ENCODE measurements at regions of chr2 and their contacts with region 1.

Region 1: DNA sequence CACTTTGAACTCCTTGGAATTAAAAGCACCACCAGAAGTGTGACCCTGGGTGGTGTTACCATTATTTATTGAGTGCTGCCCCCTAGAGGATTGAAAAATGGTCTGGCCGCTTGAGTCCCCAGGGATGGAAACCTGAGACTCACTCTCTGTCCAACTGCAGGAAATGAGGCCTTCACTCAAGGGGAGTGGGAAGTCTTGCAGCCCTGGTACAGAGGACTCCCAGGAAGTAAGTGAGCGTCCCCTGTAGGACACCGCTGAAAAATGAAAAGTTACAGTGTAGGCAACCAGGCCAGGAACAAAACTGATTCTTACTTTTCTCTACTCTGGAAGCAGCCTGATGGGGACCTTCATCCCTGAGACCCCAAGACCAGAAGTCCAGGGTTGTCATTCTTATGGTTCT is 2.2 kb upstream of the NRP2 start:
- H3K4me3 Mint-ChIP-seq: no peak overlapping the region
- H3K27ac Mint-ChIP-seq: no peak overlapping the region
- H3K4me1 Mint-ChIP-seq: peaks cover 31% of the 10 kb centered on the region
- H3K27me3 Mint-ChIP-seq: peaks cover 50% of the 10 kb centered on the region

Region 2: GRCh38 chr2:204325468-204325867 is 1354.6 kb before region 1 on chr2:
- intact Hi-C with region 1: loop called (anchors 2 kb)
- H3K4me3 Mint-ChIP-seq: no peak overlapping the region
- H3K27ac Mint-ChIP-seq: no peak overlapping the region
- H3K4me1 Mint-ChIP-seq: no peaks in the 10 kb centered on the region
- H3K27me3 Mint-ChIP-seq: peaks cover 2% of the 10 kb centered on the region

Region 3: GRCh38 chr2:204715361-204715760 is 964.7 kb before region 1 on chr2:
- intact Hi-C with region 1: no loop called
- H3K4me3 Mint-ChIP-seq: no peak overlapping the region
- H3K27ac Mint-ChIP-seq: no peak overlapping the region
- H3K4me1 Mint-ChIP-seq: no peaks in the 10 kb centered on the region
- H3K27me3 Mint-ChIP-seq: no peaks in the 10 kb centered on the region

Region 4: GRCh38 chr2:204871231-204871953 is 808.7 kb before region 1 on chr2:
- intact Hi-C with region 1: loop called (anchors 5 kb)
- H3K4me3 Mint-ChIP-seq: no peak overlapping the region
- H3K27ac Mint-ChIP-seq: peak overlapping the region; percentile 7
- H3K4me1 Mint-ChIP-seq: peaks cover 6% of the 10 kb centered on the region
- H3K27me3 Mint-ChIP-seq: no peaks in the 10 kb centered on the region

Region 5: DNA sequence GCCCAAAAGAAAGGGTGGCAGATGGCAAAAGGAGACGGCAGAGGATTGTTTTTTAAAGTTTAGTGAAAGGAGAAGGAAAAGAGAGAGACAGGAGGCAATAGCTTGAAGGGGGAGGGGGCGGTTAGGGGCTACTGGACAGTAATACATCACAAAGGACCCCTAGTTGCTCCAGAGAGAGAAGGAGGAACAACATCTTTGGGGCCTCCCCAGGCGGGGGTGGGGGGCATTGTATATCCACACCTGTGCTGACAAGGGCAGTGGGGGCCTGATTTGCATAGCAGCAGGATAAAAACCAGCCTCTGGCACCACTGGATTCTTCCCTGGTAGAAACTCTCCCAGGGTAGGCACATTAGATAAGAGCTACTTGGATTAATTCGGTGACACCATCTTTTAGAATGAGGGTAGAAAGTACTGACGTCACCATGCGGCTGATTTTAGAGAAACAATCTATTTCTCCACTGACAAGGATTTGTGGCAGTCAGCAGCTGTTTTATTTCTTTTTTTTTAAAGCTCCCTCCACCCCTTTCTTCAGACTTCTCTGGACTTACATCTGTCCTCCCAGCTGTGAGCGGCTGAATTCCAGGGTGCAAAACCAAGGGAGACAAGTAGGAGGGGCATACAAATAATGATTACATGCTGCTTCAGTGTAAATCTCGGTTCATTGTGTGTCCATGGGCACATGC is 197.5 kb before region 1 on chr2:
- intact Hi-C with region 1: no loop called
- H3K4me3 Mint-ChIP-seq: no peak overlapping the region
- H3K27ac Mint-ChIP-seq: no peak overlapping the region
- H3K4me1 Mint-ChIP-seq: no peaks in the 10 kb centered on the region
- H3K27me3 Mint-ChIP-seq: no peaks in the 10 kb centered on the region

Region 6: DNA sequence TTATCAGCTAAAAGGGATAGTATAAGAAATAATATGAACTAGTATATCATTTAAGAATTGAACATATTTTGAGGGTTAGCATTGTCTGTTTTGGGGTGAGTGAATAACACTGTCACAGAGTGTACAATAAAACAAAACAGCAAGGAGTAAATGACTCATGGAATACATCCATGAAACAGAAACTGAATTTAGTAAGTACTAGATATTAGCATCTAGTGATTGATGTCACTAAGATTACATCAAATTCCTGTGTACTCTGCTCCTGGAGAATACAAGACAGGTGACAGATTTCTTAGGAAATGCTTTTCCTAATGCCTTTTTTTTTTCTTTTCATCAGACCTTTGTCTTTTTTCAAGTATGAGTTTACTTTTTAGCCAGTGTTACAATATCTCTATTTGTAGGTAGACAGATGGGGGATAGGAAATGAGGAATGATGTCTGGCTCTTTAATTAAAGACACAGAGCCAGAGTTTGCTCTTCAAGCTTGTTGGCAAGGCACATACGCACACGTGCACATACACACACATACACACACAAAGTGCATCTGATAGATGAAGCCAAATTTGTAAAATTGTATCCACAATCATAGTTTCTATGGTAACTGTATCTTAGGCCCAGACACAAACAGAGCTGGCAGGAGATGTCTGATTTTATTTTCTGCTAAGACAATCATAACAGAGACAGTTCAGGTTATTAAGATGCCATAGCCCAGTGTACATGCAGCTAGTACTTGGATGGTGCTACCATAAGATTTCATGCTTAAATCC is 135.9 kb before region 1 on chr2:
- intact Hi-C with region 1: loop called (anchors 10 kb)
- H3K4me3 Mint-ChIP-seq: no peak overlapping the region
- H3K27ac Mint-ChIP-seq: no peak overlapping the region
- H3K4me1 Mint-ChIP-seq: peaks cover 38% of the 10 kb centered on the region
- H3K27me3 Mint-ChIP-seq: no peaks in the 10 kb centered on the region

Region 7: DNA sequence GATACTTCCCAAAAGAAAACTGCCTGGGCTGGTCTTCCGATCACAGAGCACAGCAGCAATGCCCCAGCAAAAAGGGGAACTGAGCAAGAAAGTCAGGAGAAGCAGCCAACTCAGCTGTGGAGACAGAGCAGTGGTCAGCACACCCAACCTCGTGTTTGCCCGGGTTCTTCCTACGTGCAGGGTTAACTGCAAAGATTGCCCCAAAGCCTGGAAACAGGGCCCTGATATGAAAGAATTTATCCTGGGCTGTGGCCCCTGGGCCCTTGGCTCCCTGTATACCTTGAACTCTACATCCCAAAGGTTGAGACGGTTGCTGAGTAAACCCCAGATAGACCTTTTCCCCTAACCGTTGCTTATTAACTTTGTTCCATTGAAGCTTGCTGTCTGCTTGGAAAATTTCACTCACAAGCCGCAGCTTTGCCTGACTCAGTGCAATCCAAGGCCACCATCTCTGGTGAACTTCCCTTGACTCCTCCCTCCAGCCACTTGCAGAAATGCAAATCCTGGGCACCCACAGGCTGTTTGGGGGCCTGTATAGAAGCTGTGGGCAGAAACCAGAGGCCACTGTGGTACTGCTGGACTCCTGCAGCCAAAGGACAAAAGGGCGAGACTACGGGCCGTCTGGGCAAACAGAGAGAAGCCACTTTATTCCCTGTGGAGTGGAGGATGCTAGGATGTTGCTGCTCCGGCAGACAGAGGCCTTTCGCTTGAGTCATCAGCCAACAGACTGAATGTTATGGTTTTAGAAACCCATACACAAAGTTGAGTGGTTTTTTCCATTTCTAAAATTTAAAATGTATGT is 20.5 kb after region 1 on chr2:
- intact Hi-C with region 1: loop called (anchors 2 kb)
- H3K4me3 Mint-ChIP-seq: peak overlapping the region; percentile 44
- H3K27ac Mint-ChIP-seq: peak overlapping the region; percentile 96
- H3K4me1 Mint-ChIP-seq: peaks cover 87% of the 10 kb centered on the region
- H3K27me3 Mint-ChIP-seq: peaks cover 3% of the 10 kb centered on the region

Region 8: DNA sequence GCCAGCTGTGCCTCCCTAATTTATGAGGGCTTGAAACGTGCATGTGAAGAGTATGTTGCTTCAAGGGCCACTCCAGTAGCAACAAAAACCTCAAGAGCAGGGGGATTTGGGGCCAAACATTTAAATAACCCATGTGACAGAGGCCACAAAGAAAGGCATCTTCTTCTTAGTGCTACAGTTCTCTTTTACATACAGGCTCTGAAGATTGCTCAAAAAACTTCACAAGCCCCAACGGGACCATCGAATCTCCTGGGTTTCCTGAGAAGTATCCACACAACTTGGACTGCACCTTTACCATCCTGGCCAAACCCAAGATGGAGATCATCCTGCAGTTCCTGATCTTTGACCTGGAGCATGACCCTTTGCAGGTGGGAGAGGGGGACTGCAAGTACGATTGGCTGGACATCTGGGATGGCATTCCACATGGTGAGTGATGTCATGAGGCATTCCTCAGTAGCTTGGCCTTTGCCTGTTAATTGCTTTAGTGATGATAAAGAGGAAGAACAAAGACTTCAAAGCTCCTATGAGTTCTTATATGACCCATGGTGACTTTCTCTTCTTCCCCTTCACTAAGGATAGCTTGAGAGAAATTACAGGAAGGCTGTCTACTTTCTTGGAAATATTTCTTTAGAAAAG is 42.3 kb after region 1 on chr2:
- intact Hi-C with region 1: loop called (anchors 2 kb)
- H3K4me3 Mint-ChIP-seq: no peak overlapping the region
- H3K27ac Mint-ChIP-seq: peak overlapping the region; percentile 84
- H3K4me1 Mint-ChIP-seq: peaks cover 54% of the 10 kb centered on the region
- H3K27me3 Mint-ChIP-seq: peaks cover 13% of the 10 kb centered on the region

Region 9: DNA sequence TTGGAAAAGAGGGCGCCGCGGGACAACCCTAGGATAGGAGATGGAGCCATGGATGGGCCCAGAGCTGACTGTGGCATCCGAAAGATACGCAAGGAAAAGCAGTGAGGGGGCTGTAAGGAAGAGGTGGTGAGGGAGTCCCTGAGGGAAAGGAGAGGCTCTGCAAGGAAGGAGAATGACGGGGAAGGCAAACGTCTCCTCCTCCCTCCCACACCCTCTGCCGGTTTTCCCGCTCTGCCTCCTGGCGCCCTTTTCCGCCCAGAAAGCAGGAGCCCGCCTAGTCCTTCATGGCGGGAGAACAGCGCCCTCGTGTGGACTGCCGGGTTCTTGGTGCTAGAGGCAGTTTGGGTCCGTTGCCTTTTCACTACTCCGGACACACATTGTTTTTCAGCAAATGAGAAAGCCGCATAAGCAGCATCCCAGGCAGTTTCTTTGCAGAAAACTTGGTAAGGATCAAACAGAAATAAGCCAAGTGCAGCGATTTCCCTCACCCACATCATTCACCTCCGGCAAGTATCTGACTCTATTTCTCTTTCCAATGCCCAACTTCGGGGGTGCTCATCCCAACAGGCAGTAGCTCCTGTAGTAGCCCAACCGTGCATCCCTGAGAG is 205.5 kb after region 1 on chr2:
- intact Hi-C with region 1: loop called (anchors 10 kb)
- H3K4me3 Mint-ChIP-seq: no peak overlapping the region
- H3K27ac Mint-ChIP-seq: no peak overlapping the region
- H3K4me1 Mint-ChIP-seq: no peaks in the 10 kb centered on the region
- H3K27me3 Mint-ChIP-seq: peaks cover 8% of the 10 kb centered on the region